Ovary (tissue), 10 donors: ENCODE measurements at regions of chr4 and their contacts with region 1.

Region 1: DNA sequence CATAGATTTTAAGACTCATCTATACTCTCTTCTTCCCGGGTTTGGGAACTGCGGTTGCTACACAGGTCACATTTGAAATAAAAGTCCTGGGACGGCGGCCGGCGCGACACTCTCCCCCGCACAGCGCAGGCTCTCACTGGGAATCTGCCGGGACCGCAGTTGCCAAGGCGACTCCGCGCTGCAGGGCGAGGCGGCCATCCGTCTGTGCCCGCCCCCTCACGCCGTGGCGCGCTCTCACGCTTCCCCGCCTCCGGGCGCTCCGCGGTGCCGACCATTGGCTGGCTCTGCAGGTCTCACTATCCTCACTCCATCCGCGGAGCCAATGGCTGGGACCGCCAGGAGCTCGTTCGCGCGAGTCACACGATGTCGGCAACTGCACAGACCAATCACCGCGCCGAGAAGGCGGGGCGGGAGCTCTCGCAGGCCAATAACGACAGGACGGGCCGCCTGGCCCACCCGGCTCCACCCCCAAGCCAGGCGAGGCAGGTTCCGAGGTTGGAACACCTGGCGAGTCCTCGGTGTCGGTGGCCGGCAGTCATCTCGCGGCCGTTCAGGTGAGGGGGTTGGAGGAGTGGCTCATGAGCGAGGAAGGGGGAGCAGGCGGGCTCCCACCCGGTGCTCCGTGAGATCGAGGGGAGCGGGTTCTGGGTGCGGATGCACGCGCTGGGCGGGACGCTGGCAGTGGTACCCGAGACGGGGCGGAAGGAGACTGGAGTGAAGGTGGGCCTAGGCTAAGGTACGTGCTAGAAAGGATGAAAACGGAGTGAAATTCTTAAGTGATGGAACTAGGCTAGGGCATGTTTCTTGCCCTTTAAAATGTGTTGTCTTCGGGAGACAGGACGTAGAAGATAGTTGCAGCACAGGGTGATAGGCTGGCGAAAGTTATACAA is at the start of gene MSMO1:
- DNase-seq: peak; percentile 98 to 99 (median 99)
- H3K4me3 ChIP-seq: peak within 1 kb of the TSS; percentile 90
- H3K27ac ChIP-seq: peak within 1 kb of the TSS; percentile 77 to 82
- H3K4me1 ChIP-seq: peaks cover 10% of the 10 kb centered on the region
- H3K27me3 ChIP-seq: no peaks in the 10 kb centered on the region
- CTCF ChIP-seq: no peak
- EP300 ChIP-seq: no peak
- POLR2A ChIP-seq: peak; percentile 65
- total RNA-seq, gene MSMO1: 19.8 to 172 (median 25.7) TPM

Region 2: DNA sequence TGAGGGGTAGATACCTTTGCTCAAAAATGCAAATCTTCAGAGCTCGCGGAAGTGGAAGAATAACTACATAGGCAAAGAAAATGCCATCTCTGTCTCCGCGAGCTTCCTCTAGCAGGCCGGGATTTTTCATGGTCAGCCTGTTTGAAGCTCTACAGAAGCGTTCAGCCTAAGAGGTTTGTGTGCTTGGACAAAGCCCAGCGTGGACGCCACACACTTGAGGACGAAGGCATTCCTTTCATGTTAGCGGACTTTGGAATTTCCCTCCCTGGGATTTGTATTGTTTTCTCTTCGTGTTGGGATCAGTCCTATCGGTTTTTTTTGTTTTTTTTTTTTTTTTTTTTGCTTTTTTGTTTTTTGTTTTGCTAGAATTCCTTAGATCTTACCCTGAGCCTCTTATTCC is 519.8 kb before region 1 on chr4:
- intact Hi-C with region 1: no loop called
- DNase-seq: peak in 4 of 5 donors; percentile 17 to 42 (median 20)
- H3K4me3 ChIP-seq: no peak overlapping the region
- H3K27ac ChIP-seq: no peak overlapping the region
- H3K4me1 ChIP-seq: no peaks in the 10 kb centered on the region
- H3K27me3 ChIP-seq: no peaks in the 10 kb centered on the region
- CTCF ChIP-seq: no peak
- EP300 ChIP-seq: no peak
- POLR2A ChIP-seq: no peak

Region 3: DNA sequence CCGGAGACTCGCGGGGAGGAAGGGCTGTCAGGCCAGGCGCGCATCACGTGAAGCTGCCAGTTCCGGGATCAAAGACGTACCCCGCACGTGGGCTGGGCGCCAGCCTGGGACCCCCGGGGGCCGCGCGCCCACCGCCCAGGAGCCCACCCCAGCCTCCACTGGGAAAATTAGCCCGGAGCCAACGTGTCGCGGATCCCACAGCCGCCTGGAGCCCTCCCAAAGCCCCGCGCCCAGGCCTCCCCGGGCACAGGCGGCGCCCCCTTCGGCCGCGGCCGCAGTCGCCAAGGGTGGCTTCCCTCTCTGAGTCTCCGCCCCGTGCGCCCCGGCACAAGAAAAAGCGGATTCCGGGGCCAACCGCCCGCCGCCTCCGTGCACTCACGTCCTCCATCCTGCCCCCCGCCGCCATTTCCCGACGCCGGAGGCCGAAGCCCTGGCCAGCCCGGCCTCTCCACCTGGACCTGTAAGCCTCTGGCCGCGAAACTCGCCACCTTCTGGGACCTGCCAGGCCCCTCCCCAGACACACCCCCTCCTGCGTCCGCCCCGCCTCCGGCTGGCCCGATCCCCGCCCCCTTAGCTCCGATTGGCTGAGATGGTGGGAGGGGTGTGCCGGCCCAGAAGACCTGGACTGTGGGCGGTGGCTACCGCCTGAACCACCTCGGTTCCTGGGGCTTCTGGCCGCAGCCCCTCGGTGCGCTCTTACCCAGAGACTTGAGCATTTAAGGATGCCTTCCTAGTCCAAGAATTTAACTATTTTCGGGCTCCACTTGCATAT is 214.9 kb before region 1 on chr4 and contains the start of gene TMEM192:
- intact Hi-C with region 1: loop called in 2 of 4 experiments (anchors 5 to 10 kb)
- DNase-seq: peak; percentile 94 to 97 (median 96)
- H3K4me3 ChIP-seq: peak within 1 kb of the TSS; percentile 96
- H3K27ac ChIP-seq: peak within 1 kb of the TSS; percentile 94 to 95
- H3K4me1 ChIP-seq: no peaks in the 10 kb centered on the region
- H3K27me3 ChIP-seq: no peaks in the 10 kb centered on the region
- CTCF ChIP-seq: peak; percentile 42 to 60 (median 46)
- EP300 ChIP-seq: no peak
- POLR2A ChIP-seq: peak; percentile 42
- total RNA-seq, gene TMEM192: 16.7 to 35.2 (median 25.3) TPM